ENCODE measurements at regions of chr5 and their contacts with region 1.

Region 1: GRCh38 chr5:45225571-45226031 is 416.9 kb downstream of the MRPS30 start:
- DNase-seq: no peak
- ATAC-seq: no peak
- H3K4me3 ChIP-seq: no peak overlapping the region
- H3K27ac ChIP-seq: no peak overlapping the region
- H3K4me1 ChIP-seq: no peaks in the 10 kb centered on the region
- H3K27me3 ChIP-seq: no peaks in the 10 kb centered on the region
- CTCF ChIP-seq: no peak

Region 2: GRCh38 chr5:44987026-44987425 is 238.6 kb before region 1 on chr5:
- intact Hi-C with region 1: no loop called
- DNase-seq: no peak
- ATAC-seq: no peak
- H3K4me3 ChIP-seq: no peak overlapping the region
- H3K27ac ChIP-seq: no peak overlapping the region
- H3K4me1 ChIP-seq: no peaks in the 10 kb centered on the region
- H3K27me3 ChIP-seq: no peaks in the 10 kb centered on the region
- CTCF ChIP-seq: no peak

Region 3: GRCh38 chr5:45162974-45163373 is 62.6 kb before region 1 on chr5:
- intact Hi-C with region 1: loop called in 1 of 2 experiments (anchors 2 kb)
- DNase-seq: no peak
- ATAC-seq: no peak
- H3K4me3 ChIP-seq: no peak overlapping the region
- H3K27ac ChIP-seq: no peak overlapping the region
- H3K4me1 ChIP-seq: no peaks in the 10 kb centered on the region
- H3K27me3 ChIP-seq: no peaks in the 10 kb centered on the region
- CTCF ChIP-seq: no peak

Region 4: GRCh38 chr5:45189481-45189880 is 36.1 kb before region 1 on chr5:
- intact Hi-C with region 1: no loop called
- DNase-seq: no peak
- ATAC-seq: no peak
- H3K4me3 ChIP-seq: no peak overlapping the region
- H3K27ac ChIP-seq: no peak overlapping the region
- H3K4me1 ChIP-seq: no peaks in the 10 kb centered on the region
- H3K27me3 ChIP-seq: no peaks in the 10 kb centered on the region
- CTCF ChIP-seq: no peak

Region 5: GRCh38 chr5:45260292-45260691 is 34.7 kb after region 1 on chr5:
- intact Hi-C with region 1: loop called in 1 of 2 experiments (anchors 1 kb)
- DNase-seq: no peak
- ATAC-seq: no peak
- H3K4me3 ChIP-seq: no peak overlapping the region
- H3K27ac ChIP-seq: no peak overlapping the region
- H3K4me1 ChIP-seq: no peaks in the 10 kb centered on the region
- H3K27me3 ChIP-seq: no peaks in the 10 kb centered on the region
- CTCF ChIP-seq: no peak

Region 6: DNA sequence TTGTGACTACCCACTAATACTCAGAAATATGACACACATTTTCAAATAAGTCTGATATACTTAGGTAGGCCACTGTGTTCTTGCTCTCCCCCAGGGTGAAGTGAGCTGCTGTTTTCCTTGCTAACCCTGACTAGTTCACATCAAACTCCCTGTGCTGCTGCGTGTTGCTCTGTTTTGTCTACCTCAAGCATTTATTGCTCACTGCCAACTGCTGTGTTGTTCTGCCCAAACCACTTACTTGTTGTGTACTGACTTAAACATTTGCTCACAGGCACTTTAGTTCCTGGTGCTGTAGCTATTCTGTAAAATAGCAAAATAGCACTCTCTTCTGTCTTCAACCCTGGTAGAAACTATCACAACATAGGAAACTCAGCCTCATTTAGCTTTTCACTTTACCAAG is 214.9 kb after region 1 on chr5:
- intact Hi-C with region 1: no loop called
- DNase-seq: no peak
- ATAC-seq: no peak
- H3K4me3 ChIP-seq: no peak overlapping the region
- H3K27ac ChIP-seq: peak overlapping the region; percentile 13
- H3K4me1 ChIP-seq: peaks cover 7% of the 10 kb centered on the region
- H3K27me3 ChIP-seq: no peaks in the 10 kb centered on the region
- CTCF ChIP-seq: no peak